ENCODE measurements at regions of chr13 and their contacts with region 1.

Region 1: DNA sequence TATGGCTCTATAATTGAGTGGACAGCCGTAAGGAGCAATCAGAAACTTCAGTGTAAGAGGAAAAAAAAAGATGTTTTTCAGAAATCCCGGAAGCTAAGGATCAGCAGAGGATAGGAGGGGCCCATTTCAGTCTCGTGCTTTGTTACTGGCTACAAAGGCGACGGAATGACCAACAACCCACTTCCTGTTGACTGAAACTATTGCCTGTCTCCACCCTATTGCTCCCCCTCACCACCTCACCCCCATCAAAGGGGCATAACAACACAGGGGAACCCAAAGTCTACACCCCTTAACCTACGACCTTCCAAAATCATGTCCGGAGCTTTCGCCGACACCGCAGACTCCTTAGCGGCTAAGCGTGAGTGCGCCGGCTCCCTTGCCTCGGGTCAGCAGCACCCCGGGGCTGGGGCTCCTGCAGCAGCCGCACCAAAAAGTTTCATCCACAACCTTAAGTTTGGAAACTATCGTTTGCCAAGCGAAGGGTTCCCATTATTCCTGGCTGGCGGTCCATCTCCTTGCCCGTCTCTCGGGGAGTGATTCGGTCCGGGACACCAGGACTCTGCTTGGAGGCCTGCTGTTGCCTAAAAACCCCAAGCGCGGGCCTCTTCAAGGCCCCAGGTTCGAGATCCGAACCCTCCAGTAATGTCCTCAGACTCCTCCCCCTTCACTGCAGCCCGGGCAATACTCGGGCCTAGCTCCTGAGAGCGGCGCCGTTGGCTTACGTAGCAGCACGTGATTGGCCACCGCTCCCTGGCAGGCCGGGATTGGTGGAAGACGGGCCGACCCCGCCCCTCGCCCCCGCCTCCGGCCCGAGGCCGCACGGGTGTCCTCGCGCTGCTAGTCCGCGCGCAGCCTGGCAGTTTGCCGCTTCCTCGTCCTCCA is at the start of gene TPP2:
- DNase-seq: peak; percentile 97
- H3K4me3 Mint-ChIP-seq: peak within 1 kb of the TSS; percentile 97
- H3K27ac Mint-ChIP-seq: peak within 1 kb of the TSS; percentile 100
- H3K4me1 Mint-ChIP-seq: peaks cover 55% of the 10 kb centered on the region
- H3K27me3 Mint-ChIP-seq: no peaks in the 10 kb centered on the region
- total RNA-seq, gene TPP2: 75.5 and 76.5 TPM in 2 replicates

Region 2: GRCh38 chr13:102394158-102395053 is 202.0 kb before region 1 on chr13:
- intact Hi-C with region 1: loop called (anchors 5 kb)
- DNase-seq: peak; percentile 94
- H3K4me3 Mint-ChIP-seq: peak overlapping the region; percentile 86
- H3K27ac Mint-ChIP-seq: peak overlapping the region; percentile 84
- H3K4me1 Mint-ChIP-seq: peaks cover 26% of the 10 kb centered on the region
- H3K27me3 Mint-ChIP-seq: peaks cover 17% of the 10 kb centered on the region

Region 3: GRCh38 chr13:102405496-102406100 is 190.8 kb before region 1 on chr13:
- intact Hi-C with region 1: no loop called
- DNase-seq: no peak
- H3K4me3 Mint-ChIP-seq: no peak overlapping the region
- H3K27ac Mint-ChIP-seq: no peak overlapping the region
- H3K4me1 Mint-ChIP-seq: peaks cover 19% of the 10 kb centered on the region
- H3K27me3 Mint-ChIP-seq: peaks cover 38% of the 10 kb centered on the region

Region 4: DNA sequence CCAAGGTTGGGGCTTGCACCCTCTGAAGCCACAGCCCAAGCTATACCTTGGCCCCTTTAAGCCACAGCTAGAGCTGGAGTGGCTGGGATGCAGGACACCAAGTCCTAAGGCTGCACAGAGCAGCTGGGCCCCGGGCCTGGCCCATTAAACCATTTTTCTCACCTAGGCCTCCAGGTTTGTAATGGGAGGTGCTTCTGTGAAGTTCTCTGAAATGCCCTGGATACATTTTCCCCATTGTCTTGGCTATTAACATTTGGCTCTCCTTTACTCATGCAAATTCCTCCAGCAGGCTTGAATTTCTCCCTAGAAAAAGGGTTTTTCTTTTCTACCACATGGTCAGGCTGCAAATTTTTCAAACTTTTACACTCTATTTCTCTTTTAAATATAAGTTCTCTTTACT is 100.7 kb before region 1 on chr13:
- intact Hi-C with region 1: no loop called
- DNase-seq: no peak
- H3K4me3 Mint-ChIP-seq: no peak overlapping the region
- H3K27ac Mint-ChIP-seq: no peak overlapping the region
- H3K4me1 Mint-ChIP-seq: no peaks in the 10 kb centered on the region
- H3K27me3 Mint-ChIP-seq: peaks cover 14% of the 10 kb centered on the region

Region 5: GRCh38 chr13:102609696-102610095 is 13.3 kb after region 1 on chr13:
- intact Hi-C with region 1: loop called (anchors 2 kb)
- DNase-seq: no peak
- H3K4me3 Mint-ChIP-seq: no peak overlapping the region
- H3K27ac Mint-ChIP-seq: peak overlapping the region; percentile 66
- H3K4me1 Mint-ChIP-seq: peaks cover 37% of the 10 kb centered on the region
- H3K27me3 Mint-ChIP-seq: no peaks in the 10 kb centered on the region

Region 6: DNA sequence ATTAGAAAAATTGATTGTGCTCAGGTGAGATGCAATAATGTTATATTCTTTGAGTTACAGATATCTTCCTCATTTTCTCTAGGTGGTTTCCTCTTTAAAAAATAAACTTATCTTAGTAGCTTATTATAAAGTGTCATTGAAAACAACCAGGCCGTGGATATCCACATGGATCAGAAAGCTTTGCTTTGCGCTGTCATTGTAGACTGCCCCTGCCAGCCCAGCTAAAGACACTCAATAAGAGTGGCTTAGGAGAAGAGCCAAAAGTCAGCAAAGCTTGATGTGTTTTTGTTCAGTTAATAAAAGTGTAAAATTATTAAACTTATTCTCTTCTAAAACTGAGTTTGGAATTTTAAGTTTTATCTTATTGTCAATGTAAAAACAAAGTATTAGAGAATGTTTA is 34.8 kb after region 1 on chr13:
- intact Hi-C with region 1: loop called (anchors 5 kb)
- DNase-seq: no peak
- H3K4me3 Mint-ChIP-seq: no peak overlapping the region
- H3K27ac Mint-ChIP-seq: no peak overlapping the region
- H3K4me1 Mint-ChIP-seq: no peaks in the 10 kb centered on the region
- H3K27me3 Mint-ChIP-seq: no peaks in the 10 kb centered on the region

Region 7: DNA sequence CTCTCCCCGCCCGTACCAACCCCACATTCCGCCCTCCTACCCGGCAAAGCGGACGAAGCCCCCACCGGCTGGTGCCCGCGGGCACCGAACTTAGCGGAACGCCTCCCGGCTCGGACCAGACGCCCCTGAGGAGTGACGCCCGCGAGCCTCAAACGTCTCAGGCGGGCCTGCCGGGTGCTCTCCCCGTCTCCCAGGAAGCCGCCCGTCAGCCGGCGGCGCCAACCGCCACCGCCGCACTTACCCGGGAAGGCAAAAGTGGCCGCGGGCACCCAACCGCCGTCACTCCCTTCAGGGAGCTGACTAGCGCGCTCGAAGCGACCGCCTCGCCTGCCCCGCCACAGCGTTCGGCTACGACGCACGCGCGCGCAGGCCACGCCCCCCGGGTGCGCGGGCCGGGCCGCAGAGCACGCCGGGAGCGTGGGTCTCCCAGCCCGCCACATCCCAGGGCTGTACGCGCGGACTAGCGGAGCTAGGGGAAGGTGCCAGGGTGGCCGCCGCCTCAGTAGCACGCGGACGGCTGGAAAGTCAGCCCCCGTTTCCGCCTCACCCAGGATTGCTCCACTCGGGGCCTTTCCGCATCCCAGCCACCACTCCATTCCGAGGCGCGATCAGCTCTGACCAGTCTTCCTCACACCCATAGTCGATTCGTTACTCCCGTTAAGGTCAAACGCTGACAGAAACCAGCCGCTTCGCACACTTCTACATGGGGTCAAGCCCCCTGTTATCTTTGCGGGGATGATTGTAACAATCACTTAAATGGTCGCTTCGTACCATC is 177.2 kb after region 1 on chr13 and contains the start of gene TEX30:
- intact Hi-C with region 1: loop called (anchors 1 kb)
- DNase-seq: peak; percentile 86
- H3K4me3 Mint-ChIP-seq: peak within 1 kb of the TSS; percentile 95
- H3K27ac Mint-ChIP-seq: peak within 1 kb of the TSS; percentile 93
- H3K4me1 Mint-ChIP-seq: peaks cover 53% of the 10 kb centered on the region
- H3K27me3 Mint-ChIP-seq: no peaks in the 10 kb centered on the region
- total RNA-seq, gene TEX30: 54.8 and 58.9 TPM in 2 replicates

Region 8: GRCh38 chr13:102779436-102780159 is 183.2 kb after region 1 on chr13:
- intact Hi-C with region 1: loop called (anchors 1 kb)
- DNase-seq: peak; percentile 55
- H3K4me3 Mint-ChIP-seq: peak overlapping the region; percentile 50
- H3K27ac Mint-ChIP-seq: peak overlapping the region; percentile 98
- H3K4me1 Mint-ChIP-seq: peaks cover 36% of the 10 kb centered on the region
- H3K27me3 Mint-ChIP-seq: no peaks in the 10 kb centered on the region

Region 9: GRCh38 chr13:102800145-102801041 is 204.0 kb after region 1 on chr13:
- intact Hi-C with region 1: loop called (anchors 1 kb)
- DNase-seq: peak; percentile 82
- H3K4me3 Mint-ChIP-seq: peak overlapping the region; percentile 95
- H3K27ac Mint-ChIP-seq: peak overlapping the region; percentile 89
- H3K4me1 Mint-ChIP-seq: peaks cover 41% of the 10 kb centered on the region
- H3K27me3 Mint-ChIP-seq: no peaks in the 10 kb centered on the region

Measured in activated T-helper 2 cell treated with anti-CD3 and anti-CD28 coated beads, Interferon-gamma antibody, Interleukin-2, Interleukin-4, amounts not matched to agents 10 μg/mL and 5 μg/mL and 100 μg/mL, durations not matched to agents 14 hours and 24 hours and 36 hours (primary cell).